Breast epithelium (tissue), 4 donors: ENCODE measurements at regions of chr1 and their contacts with region 1.

Region 1: DNA sequence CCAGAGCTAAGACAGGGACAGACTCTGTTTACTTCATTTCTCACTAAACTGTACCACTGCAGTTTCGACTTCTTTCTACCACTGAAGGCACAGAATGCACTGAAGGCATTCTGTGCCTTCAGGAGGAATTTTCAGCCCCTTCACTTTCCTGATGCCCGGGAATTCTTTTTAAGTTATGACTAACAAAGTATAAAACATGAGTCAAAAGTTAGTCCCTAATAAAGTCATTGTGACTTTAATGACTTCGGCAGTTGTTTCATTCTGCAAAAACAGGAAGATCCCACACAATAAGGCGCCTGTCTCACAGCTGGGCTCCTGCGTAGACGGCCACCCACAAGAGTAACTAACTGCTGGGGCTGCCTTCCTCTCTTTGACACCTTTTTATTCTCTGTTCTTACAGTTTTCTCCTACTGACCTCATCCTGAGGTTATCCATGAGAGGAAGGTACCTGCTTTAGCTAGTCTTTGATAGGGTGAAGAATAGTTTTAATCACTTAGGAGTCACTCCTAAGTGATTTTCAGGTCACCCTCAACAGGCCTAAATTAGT is 183.9 kb upstream of the SGIP1 start:
- DNase-seq: no peak
- H3K4me3 ChIP-seq: peak overlapping the region in 1 of 3 donors; percentile 41
- H3K27ac ChIP-seq: peak overlapping the region; percentile 80 to 83
- H3K4me1 ChIP-seq: peaks cover 4 to 9% of the 10 kb centered on the region in 2 donors
- H3K27me3 ChIP-seq: no peaks in the 10 kb centered on the region
- CTCF ChIP-seq: no peak
- POLR2A ChIP-seq: no peak

Region 2: GRCh38 chr1:65148548-65149350 is 1201.3 kb before region 1 on chr1:
- intact Hi-C with region 1: loop called (anchors 5 kb)
- DNase-seq: peak in 1 of 2 donors; percentile 44
- H3K4me3 ChIP-seq: peak overlapping the region; percentile 68 to 97 (median 69)
- H3K27ac ChIP-seq: peak overlapping the region; percentile 95 to 96
- H3K4me1 ChIP-seq: no peaks in the 10 kb centered on the region
- H3K27me3 ChIP-seq: no peaks in the 10 kb centered on the region
- CTCF ChIP-seq: no peak
- POLR2A ChIP-seq: no peak

Region 3: GRCh38 chr1:67479146-67479891 is 1129.2 kb after region 1 on chr1:
- intact Hi-C with region 1: no loop called
- DNase-seq: no peak
- H3K4me3 ChIP-seq: peak overlapping the region in 1 of 3 donors; percentile 31
- H3K27ac ChIP-seq: peak overlapping the region in 1 of 2 donors; percentile 21
- H3K4me1 ChIP-seq: peaks cover 0 to 4% of the 10 kb centered on the region in 2 donors
- H3K27me3 ChIP-seq: no peaks in the 10 kb centered on the region
- CTCF ChIP-seq: no peak
- POLR2A ChIP-seq: no peak